Heart right ventricle (tissue), 16 donors: ENCODE measurements at regions of chr6 and their contacts with region 1.

Region 1: DNA sequence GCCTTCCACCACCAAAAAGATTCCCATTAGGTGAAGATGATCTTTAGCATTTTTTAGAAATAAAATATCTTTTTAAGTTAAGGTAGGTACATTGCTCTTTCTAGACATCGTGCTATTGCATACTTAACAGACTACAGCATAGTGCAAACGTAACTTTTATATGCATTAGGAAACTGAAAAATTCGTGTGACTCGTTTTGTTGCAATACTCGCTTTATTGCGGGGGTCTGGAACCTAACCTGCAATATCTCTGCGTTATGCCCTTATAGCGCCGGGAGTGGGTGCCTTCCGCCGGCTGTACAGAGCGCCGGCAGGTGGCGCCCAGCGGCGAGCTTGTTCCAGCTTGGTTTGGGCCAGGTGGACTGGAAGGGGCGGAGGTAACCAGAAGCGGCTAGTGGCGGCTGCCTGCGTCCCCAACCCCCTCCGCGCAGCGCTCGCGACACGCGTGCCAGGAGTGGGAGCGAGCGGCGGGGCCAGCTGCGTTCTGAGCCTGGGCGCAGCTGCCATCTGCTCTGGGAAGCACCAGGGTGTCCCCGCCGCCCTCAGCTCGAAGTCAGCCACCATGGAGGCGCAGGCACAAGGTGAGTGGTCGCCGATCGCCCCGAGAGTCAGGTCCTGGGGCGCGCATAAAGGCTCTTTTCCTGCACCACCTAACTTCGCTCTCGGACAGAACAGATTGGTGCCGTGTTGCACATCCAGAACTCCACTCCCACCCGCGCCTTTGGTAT is at the start of gene TPD52L1:
- DNase-seq: peak; percentile 81
- ATAC-seq: peak; percentile 91 to 97 (median 94)
- H3K4me3 ChIP-seq: peak within 1 kb of the TSS; percentile 62 to 83 (median 74)
- H3K27ac ChIP-seq: peak within 1 kb of the TSS; percentile 66 to 90 (median 80)
- H3K4me1 ChIP-seq: peaks cover 0 to 39% (median 21%) of the 10 kb centered on the region in 9 donors
- H3K27me3 ChIP-seq: peaks cover 0 to 21% (median 0%) of the 10 kb centered on the region in 7 donors
- CTCF ChIP-seq: peak; percentile 66 to 92 (median 85)
- total RNA-seq, gene TPD52L1: 39.4 to 97.8 (median 59.8) TPM

Region 2: GRCh38 chr6:125191916-125192609 is 38.5 kb after region 1 on chr6:
- intact Hi-C with region 1: loop called in 4 of 10 experiments (anchors 5 kb)
- DNase-seq: peak; percentile 20 to 36
- ATAC-seq: peak in 7 of 8 donors; percentile 24 to 81 (median 66)
- H3K4me3 ChIP-seq: no peak overlapping the region
- H3K27ac ChIP-seq: no peak overlapping the region
- H3K4me1 ChIP-seq: peaks cover 4 to 69% (median 46%) of the 10 kb centered on the region in 9 donors
- H3K27me3 ChIP-seq: no peaks in the 10 kb centered on the region
- CTCF ChIP-seq: peak; percentile 66 to 84 (median 69)

Region 3: DNA sequence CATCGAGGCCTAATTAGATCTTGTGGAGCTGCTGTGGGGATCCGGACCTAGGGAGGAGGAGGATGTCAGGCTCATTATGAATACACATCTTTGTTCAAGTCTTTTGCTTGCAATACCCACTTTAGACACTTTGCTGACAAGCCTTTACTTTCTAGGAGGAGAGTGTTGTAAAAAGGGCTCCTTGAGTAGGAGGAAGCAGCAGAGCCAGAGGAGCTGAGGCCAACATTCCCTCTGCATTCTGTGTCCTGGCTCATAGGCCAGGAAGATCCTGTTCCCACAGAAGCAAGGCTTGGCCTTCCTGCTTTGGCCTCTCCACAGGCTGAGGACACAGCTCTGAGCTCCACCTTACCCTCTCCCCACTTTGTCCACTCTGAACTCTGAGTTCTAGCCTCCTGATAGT is 67.2 kb after region 1 on chr6:
- intact Hi-C with region 1: loop called in 4 of 10 experiments (anchors 5 to 10 kb)
- DNase-seq: peak; percentile 17 to 32
- ATAC-seq: peak; percentile 81 to 95 (median 89)
- H3K4me3 ChIP-seq: no peak overlapping the region
- H3K27ac ChIP-seq: peak overlapping the region; percentile 47 to 84 (median 62)
- H3K4me1 ChIP-seq: peaks cover 10 to 57% (median 41%) of the 10 kb centered on the region in 9 donors
- H3K27me3 ChIP-seq: no peaks in the 10 kb centered on the region
- CTCF ChIP-seq: peak in 2 of 9 donors; percentile 10 to 21

Region 4: DNA sequence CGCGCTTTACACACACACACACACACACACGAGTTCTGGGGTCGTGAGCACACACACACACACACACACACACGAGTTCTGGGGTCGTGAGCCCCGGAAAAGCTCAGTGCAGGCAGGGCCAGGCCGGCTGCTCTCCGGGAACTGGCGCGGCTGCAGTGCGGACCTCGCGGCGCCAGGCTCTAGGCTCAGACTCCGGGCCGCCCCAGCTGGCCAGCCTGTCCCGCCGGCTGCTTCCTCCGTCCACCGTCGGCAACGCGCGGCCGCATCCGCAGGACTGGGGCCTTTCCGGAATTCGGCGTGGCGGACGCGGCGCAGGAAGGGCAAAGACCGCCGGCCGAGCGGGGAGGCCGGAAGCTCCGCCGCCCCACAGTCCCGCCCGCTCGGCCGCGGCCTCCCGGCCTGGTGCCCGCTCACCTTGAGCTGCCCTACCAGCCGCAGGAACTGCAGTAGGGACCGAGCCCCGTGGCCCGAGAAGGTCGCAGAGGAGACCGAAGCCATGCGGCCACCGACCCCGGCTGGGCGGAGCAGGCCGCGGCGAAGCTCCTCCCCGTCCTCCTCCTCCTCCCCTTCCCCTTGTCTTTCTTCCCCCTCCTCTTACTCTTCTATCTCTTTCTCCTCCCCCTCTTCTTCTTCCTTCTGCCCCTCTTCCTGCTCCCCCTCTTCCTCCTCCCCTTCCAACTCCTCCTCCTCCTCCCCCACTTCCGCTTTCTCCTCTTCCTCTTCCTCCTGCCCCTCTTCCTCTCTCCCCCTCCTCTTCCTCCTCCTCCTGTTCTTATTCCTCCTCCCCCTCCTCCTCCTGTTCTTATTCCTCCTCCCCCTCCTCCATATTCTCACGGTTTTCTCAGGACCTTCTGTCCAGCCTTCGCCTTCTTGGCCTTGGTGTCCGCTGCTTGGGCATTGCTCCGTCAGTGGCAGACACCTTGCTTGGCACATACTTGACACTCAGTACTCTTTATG is 148.2 kb after region 1 on chr6 and contains the start of gene HDDC2:
- intact Hi-C with region 1: loop called in 9 of 10 experiments (anchors 2 to 10 kb)
- DNase-seq: peak; percentile 80 to 84
- ATAC-seq: peak; percentile 87 to 96 (median 92)
- H3K4me3 ChIP-seq: peak within 1 kb of the TSS; percentile 52 to 84 (median 76)
- H3K27ac ChIP-seq: peak within 1 kb of the TSS; percentile 86 to 97 (median 95)
- H3K4me1 ChIP-seq: peaks cover 0 to 37% (median 20%) of the 10 kb centered on the region in 9 donors
- H3K27me3 ChIP-seq: no peaks in the 10 kb centered on the region
- CTCF ChIP-seq: peak in 1 of 9 donors; percentile 4
- total RNA-seq, gene HDDC2: 70.9 to 107 (median 95.1) TPM

Region 5: GRCh38 chr6:125764121-125764671 is 610.6 kb after region 1 on chr6:
- intact Hi-C with region 1: loop called in 4 of 10 experiments (anchors 10 kb)
- DNase-seq: no peak
- ATAC-seq: no peak
- H3K4me3 ChIP-seq: no peak overlapping the region
- H3K27ac ChIP-seq: peak overlapping the region in 2 of 10 donors; percentile 10 to 19
- H3K4me1 ChIP-seq: peaks cover 0 to 49% (median 9%) of the 10 kb centered on the region in 9 donors
- H3K27me3 ChIP-seq: peaks cover 0 to 11% (median 0%) of the 10 kb centered on the region in 7 donors
- CTCF ChIP-seq: no peak